Activated naive CD8-positive, alpha-beta T cell treated with anti-CD3 and anti-CD28 coated beads, Interleukin-2, amount 10 ng/mL, durations not matched to agents 7 days and 5 days (primary cell): ENCODE measurements at regions of chr5 and their contacts with region 1.

Region 1: DNA sequence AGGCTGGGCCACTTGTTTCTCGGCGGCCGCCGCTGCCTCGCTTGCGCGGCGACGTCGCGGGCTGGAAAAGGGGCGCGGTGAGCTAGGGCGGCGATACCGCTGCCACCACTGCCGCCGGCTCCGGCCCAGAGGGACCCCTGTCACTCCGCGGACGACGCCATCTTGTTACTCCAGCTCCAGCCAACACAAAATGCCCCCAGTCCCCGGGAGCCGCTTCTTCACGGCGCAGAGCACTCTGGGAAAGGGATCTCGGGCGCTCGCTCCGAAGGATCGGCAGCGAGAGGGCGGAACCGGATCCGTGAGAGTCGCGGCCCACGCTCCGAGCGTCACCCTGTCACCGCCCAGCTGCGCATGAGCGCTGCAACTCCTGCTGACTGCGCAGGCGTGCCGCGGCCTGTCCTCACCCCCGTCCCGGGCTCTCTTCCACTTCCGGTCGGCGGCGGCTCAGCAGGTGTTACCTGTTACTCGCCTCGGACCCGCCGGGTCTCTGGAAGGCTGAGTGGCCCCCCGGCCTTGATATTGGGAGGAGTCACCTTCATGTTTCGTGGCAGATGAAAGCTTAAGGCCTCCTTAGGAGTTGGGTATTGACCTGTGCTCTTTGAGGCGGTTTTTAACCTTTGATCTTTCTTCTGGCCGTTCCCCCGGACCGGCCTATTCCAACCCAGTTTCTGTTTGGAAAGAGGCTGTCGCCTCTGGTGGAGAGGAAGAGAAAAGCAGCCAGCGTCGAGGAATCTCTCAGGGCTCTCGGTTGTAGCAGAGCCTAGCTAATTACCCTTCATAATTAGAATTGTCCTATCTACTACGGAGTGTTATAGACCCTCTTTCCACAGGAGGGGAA is at the start of gene CSNK1A1:
- DNase-seq: peak; percentile 99
- ATAC-seq: peak; percentile 94
- H3K4me3 Mint-ChIP-seq: peak within 1 kb of the TSS; percentile 92
- H3K27ac Mint-ChIP-seq: peak within 1 kb of the TSS; percentile 99
- H3K4me1 Mint-ChIP-seq: peaks cover 27% of the 10 kb centered on the region
- H3K27me3 Mint-ChIP-seq: no peaks in the 10 kb centered on the region
- total RNA-seq, gene CSNK1A1: 176 to 191 TPM

Region 2: DNA sequence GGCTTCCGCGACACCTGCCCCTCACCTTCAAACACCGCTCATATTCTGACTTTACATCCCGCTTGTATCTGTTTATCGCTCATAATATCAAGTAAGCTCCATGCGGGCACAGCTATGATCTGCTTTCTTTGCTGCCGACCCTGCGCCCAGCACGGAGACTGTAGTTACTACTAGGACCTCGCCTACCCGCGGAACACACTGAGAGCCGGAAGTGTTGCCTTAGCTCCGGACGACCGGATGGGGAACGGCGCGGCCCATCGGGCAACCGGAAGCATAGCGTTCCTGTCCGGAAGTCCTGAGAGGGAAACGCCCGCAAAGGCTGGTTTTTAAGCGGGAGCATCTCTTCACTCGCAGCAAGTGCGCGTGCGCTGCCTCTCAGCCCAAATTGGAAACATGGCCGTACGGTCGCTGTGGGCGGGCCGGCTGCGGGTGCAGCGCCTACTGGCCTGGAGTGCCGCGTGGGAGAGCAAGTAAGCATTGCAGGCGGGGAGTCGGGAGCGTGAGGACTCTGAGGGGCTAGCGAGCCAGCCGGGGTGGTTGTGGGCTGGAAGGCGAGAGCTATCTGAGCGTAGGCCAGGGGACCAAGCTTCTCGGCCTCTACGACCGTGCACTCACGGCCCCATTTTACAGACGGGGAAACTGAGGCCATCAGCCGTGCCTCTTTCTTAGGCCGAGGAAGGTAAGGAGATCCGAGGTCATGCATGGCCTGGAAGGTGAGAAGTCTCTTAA is 206.1 kb before region 1 on chr5 and contains the start of gene GRPEL2:
- POLR2A ChIA-PET with region 1: interaction called, 26 read pairs
- DNase-seq: peak; percentile 88
- ATAC-seq: peak; percentile 81
- H3K4me3 Mint-ChIP-seq: peak within 1 kb of the TSS; percentile 93
- H3K27ac Mint-ChIP-seq: peak within 1 kb of the TSS; percentile 92
- H3K4me1 Mint-ChIP-seq: peaks cover 43% of the 10 kb centered on the region
- H3K27me3 Mint-ChIP-seq: no peaks in the 10 kb centered on the region
- total RNA-seq, gene GRPEL2: 26.1 to 29.7 TPM

Region 3: DNA sequence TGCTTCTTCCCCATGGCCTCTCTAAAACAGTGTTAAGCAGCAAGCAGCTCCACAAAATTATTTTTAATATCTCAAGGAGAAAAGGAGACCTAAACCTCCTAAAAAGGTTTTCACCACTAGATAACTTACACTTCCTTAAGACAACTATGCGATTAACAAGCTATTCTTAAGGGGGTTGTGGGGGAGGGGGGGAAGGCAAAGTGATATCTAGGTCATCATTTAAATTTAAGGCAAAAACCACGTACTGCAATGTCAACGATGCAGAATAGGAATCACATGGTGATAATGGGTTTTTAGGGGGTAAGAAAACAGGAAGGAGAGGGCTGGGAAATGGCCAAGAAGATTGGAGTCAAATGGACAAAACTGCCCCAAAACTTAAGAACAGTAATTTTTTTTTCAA is 32.8 kb before region 1 on chr5:
- POLR2A ChIA-PET with region 1: interaction called, 11 read pairs
- DNase-seq: no peak
- ATAC-seq: no peak
- H3K4me3 Mint-ChIP-seq: no peak overlapping the region
- H3K27ac Mint-ChIP-seq: no peak overlapping the region
- H3K4me1 Mint-ChIP-seq: peaks cover 30% of the 10 kb centered on the region
- H3K27me3 Mint-ChIP-seq: no peaks in the 10 kb centered on the region

Region 4: DNA sequence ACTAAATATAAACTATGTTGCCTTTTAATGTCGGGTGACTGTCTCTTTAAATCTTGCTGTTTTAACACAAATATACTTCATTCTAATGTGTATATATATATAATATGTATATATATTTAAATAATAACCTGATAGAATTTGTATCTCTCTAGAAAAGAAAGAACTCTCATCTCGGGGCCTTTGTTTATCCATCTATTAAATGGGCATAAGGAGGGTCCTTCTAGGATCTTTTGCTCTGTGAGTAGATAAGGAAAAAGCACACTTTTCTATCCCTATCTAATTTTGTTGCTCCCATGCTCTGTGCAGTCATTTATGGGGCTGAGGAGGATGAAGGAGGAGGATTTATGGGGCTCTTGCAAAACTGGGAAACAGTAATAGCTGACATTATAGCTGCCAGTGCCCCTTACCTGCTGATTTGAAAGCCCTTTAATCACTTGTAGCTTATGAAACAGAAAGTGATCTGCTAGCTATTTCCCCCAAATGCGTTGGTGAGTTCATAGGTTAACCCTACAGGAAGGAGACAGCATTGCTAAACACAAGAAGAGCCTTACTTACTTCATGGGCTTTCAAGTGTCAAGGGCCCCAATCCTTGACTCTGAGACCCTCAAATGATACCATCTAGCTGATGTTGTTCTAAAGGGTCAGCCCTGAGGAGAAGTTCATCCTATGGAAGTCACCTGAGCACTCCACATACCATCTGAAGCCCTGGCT is 172.9 kb after region 1 on chr5:
- POLR2A ChIA-PET with region 1: no interaction called
- DNase-seq: no peak
- ATAC-seq: peak; percentile 99
- H3K4me3 Mint-ChIP-seq: peak overlapping the region; percentile 70
- H3K27ac Mint-ChIP-seq: peak overlapping the region; percentile 87
- H3K4me1 Mint-ChIP-seq: peaks cover 13% of the 10 kb centered on the region
- H3K27me3 Mint-ChIP-seq: peaks cover 5% of the 10 kb centered on the region